ENCODE measurements at regions of chr11 and their contacts with region 1.

Region 1: GRCh38 chr11:79076526-79077115 is 364.2 kb downstream of the TENM4 start:
- DNase-seq: no peak
- ATAC-seq: peak; percentile 71
- H3K4me3 ChIP-seq: no peak overlapping the region
- H3K27ac ChIP-seq: no peak overlapping the region
- H3K4me1 ChIP-seq: no peaks in the 10 kb centered on the region
- H3K27me3 ChIP-seq: no peaks in the 10 kb centered on the region
- CTCF ChIP-seq: peak; percentile 73

Region 2: DNA sequence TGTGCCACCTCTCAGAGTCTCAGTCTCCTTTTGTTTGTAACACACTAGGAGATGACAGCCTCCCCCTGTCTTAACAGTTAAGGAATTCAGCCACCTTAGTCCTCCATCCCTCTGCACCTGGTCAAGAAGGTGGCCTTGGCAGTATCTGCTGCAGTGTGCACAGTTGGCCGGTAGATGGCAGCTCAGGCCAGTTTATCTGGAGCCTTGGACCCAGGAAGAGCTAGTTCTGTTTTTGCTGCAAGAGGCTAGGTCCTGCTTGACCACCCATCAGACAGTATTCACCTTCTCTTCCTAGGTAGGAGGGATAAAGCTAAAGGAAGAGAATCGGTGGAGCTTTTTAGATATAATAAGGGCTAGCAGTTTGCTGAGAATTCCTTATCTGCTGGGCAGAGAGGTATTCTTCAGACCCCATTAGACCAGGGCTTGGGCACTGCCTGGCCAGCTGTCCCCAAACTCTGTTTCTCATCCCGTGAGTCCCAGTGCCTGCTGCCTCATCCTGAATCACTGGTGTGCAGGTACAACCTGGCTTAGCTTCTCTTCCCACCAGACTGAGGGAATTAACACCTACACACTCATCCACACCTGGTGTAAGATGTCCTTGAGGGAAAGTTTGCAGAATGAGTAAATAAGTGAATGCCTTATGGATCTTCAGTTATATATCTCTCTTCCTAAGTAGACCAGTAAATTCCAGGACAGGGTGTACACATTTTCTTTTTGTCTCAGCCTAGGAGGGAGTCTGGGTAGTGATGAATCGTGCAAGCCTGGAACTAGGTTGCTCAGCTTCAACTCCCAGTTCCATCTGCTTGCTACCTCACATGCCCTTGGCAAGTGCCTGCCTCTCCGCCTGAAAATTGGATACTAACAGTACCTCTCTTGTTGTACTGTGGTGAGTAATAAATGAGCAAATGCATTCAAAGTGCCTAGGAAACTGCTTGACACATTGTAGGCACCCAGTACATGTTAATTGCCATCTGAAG is 431.1 kb before region 1 on chr11:
- intact Hi-C with region 1: loop called (anchors 10 kb)
- DNase-seq: peak; percentile 84
- ATAC-seq: peak; percentile 95
- H3K4me3 ChIP-seq: no peak overlapping the region
- H3K27ac ChIP-seq: no peak overlapping the region
- H3K4me1 ChIP-seq: no peaks in the 10 kb centered on the region
- H3K27me3 ChIP-seq: no peaks in the 10 kb centered on the region
- CTCF ChIP-seq: peak; percentile 94

Region 3: GRCh38 chr11:79013509-79013908 is 63.1 kb before region 1 on chr11:
- intact Hi-C with region 1: no loop called
- DNase-seq: no peak
- ATAC-seq: peak; percentile 48
- H3K4me3 ChIP-seq: no peak overlapping the region
- H3K27ac ChIP-seq: no peak overlapping the region
- H3K4me1 ChIP-seq: no peaks in the 10 kb centered on the region
- H3K27me3 ChIP-seq: no peaks in the 10 kb centered on the region
- CTCF ChIP-seq: no peak